ENCODE measurements at regions of chr4 and their contacts with region 1.

Region 1: GRCh38 chr4:166637816-166638215 is 596.5 kb downstream of the SPOCK3 start:
- DNase-seq: no peak
- ATAC-seq: no peak
- H3K4me3 ChIP-seq: no peak overlapping the region
- H3K27ac ChIP-seq: no peak overlapping the region
- H3K4me1 ChIP-seq: no peaks in the 10 kb centered on the region
- H3K27me3 ChIP-seq: no peaks in the 10 kb centered on the region
- CTCF ChIP-seq: no peak

Region 2: GRCh38 chr4:166724369-166724768 is 86.6 kb after region 1 on chr4:
- CTCF ChIA-PET with region 1: interaction called, 10 read pairs
- POLR2A ChIA-PET with region 1: no interaction called
- in situ Hi-C with region 1: no loop called
- intact Hi-C with region 1: no loop called
- DNase-seq: no peak
- ATAC-seq: no peak
- H3K4me3 ChIP-seq: no peak overlapping the region
- H3K27ac ChIP-seq: no peak overlapping the region
- H3K4me1 ChIP-seq: no peaks in the 10 kb centered on the region
- H3K27me3 ChIP-seq: no peaks in the 10 kb centered on the region
- CTCF ChIP-seq: no peak

Measured in Panc1 (cell line).